ENCODE measurements at regions of chr16 and their contacts with region 1.

Region 1: DNA sequence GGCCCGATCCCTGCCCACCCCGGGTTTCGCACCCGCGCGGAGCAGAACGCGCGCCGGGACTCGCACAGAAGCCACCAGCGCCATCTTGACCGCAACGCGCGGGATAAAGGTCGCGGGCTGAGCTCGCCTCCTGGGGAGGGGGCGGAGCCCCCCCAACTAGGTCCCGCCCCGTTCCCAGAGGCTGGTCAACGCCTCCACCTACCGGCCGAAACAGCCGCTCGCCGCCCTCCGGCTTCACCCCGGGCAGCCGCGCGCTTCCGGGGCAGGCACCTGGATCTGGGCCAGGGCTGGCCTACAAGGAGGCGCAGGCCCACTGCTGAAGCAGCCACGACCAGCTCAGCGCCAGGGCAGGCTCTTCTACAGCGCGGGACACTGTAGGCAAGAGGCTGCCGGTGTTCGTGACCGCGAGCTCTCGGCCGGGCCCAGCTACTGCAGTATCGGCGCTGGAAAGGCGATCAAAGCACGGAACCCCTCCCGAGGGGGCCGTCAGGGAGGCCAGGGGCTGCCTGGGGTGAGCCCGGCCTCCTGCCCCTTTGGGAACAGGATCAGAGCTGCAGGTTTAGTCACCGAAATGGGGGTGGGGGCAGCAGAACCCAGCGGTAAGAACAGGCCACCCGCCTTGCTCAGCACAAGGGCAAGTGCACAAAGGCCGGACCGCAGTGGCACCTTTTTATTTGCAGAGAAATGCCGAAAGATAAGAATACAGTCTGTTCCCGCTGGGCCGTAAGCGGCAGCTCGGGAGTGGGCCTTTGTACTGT is at the start of gene ECI1:
- DNase-seq: peak; percentile 92
- ATAC-seq: peak; percentile 96
- H3K4me3 ChIP-seq: peak within 1 kb of the TSS; percentile 51 to 82 (median 68)
- H3K4me3 Mint-ChIP-seq: peak within 1 kb of the TSS; percentile 88
- H3K27ac ChIP-seq: peak within 1 kb of the TSS; percentile 68 to 72
- H3K27ac Mint-ChIP-seq: peak within 1 kb of the TSS; percentile 89
- H3K4me1 ChIP-seq: peaks cover 12 to 41% of the 10 kb centered on the region in 2 donors
- H3K4me1 Mint-ChIP-seq: peaks cover 26% of the 10 kb centered on the region
- H3K27me3 ChIP-seq: no peaks in the 10 kb centered on the region
- H3K27me3 Mint-ChIP-seq: no peaks in the 10 kb centered on the region
- CTCF ChIP-seq: peak; percentile 58
- total RNA-seq, gene ECI1: 38.4 and 46.4 TPM in 2 replicates

Region 2: DNA sequence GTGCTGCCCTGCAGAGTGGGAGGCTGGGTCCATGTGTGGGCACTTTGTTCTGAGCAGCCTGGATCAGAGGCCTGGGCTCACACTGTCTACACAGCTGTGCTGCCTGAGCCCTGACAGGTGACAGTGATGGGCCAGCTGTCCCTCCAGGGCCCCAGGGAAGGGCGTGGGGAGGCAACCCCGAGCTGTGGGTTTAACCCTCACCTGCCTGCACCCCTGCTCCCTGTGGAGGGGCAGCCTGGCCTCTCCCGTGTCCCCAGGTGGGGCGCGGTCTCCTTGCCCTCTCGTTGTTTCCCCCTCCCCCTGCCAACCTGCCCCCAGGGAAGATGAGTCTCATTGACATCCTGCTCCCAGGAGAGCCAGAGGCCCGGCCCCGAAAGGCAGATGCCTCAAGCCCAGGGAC is 1411.7 kb before region 1 on chr16:
- CTCF ChIA-PET with region 1: no interaction called
- POLR2A ChIA-PET with region 1: no interaction called
- intact Hi-C with region 1: no loop called
- DNase-seq: no peak
- ATAC-seq: no peak
- H3K4me3 ChIP-seq: no peak overlapping the region
- H3K4me3 Mint-ChIP-seq: no peak overlapping the region
- H3K27ac ChIP-seq: no peak overlapping the region
- H3K27ac Mint-ChIP-seq: no peak overlapping the region
- H3K4me1 ChIP-seq: no peaks in the 10 kb centered on the region
- H3K4me1 Mint-ChIP-seq: no peaks in the 10 kb centered on the region
- H3K27me3 ChIP-seq: peaks cover 0 to 3% (median 0%) of the 10 kb centered on the region in 4 experiments
- H3K27me3 Mint-ChIP-seq: peaks cover 3% of the 10 kb centered on the region
- CTCF ChIP-seq: no peak

Region 3: GRCh38 chr16:2194852-2195321 is 56.8 kb before region 1 on chr16:
- CTCF ChIA-PET with region 1: interaction called, 71 read pairs
- POLR2A ChIA-PET with region 1: no interaction called
- intact Hi-C with region 1: loop called (anchors 1 kb)
- DNase-seq: peak; percentile 77
- ATAC-seq: peak; percentile 73
- H3K4me3 ChIP-seq: peak overlapping the region in 1 of 5 experiments; percentile 44
- H3K4me3 Mint-ChIP-seq: peak overlapping the region; percentile 78
- H3K27ac ChIP-seq: no peak overlapping the region
- H3K27ac Mint-ChIP-seq: peak overlapping the region; percentile 37
- H3K4me1 ChIP-seq: peaks cover 12 to 22% of the 10 kb centered on the region in 2 donors
- H3K4me1 Mint-ChIP-seq: peaks cover 10% of the 10 kb centered on the region
- H3K27me3 ChIP-seq: peaks cover 0 to 50% (median 20%) of the 10 kb centered on the region in 4 experiments
- H3K27me3 Mint-ChIP-seq: peaks cover 28% of the 10 kb centered on the region
- CTCF ChIP-seq: peak; percentile 47

Region 4: DNA sequence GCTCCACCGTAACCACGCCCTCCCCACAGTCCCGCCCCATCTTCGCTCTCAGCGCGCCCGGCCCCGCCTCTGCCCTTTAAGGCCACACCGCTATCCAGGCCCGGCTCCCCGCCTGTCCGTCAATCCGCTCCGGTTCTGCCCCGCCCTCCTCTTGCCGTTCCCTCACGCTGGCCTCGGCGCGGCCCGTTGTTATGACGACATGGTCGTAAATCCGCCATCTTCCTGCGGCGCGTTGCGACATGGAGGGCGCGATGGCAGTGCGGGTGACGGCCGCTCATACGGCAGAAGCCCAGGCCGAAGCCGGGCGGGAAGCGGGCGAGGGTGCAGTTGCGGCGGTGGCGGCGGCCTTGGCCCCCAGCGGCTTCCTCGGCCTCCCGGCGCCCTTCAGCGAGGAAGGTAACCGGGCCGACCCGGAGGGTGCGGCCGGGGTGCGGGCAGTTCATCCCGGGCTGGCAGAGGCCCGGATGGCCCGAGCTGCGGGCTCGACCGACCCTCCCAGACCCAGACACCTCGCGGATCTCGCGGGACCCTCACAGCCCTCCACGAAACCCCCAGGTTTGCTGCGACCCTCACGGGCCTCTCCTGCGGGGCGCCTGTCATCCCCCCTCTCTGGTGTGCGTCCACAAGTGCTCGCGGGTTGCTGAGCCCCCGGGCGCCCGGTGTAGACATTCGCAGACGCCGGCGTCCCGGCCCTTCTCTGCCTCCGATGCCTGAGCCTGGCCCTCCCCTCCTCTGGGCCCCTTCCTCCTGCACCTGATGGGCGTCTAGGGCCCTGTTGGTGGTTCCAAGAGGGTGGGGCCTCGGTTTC is 28.1 kb before region 1 on chr16 and contains the start of gene E4F1:
- CTCF ChIA-PET with region 1: interaction called, 3 read pairs
- POLR2A ChIA-PET with region 1: interaction called, 4 read pairs
- intact Hi-C with region 1: loop called (anchors 1 kb)
- DNase-seq: peak; percentile 100
- ATAC-seq: peak; percentile 99
- H3K4me3 ChIP-seq: peak within 1 kb of the TSS; percentile 51 to 92 (median 82)
- H3K4me3 Mint-ChIP-seq: peak within 1 kb of the TSS; percentile 86
- H3K27ac ChIP-seq: peak within 1 kb of the TSS; percentile 47 to 85
- H3K27ac Mint-ChIP-seq: peak within 1 kb of the TSS; percentile 86
- H3K4me1 ChIP-seq: peaks cover 6 to 16% of the 10 kb centered on the region in 2 donors
- H3K4me1 Mint-ChIP-seq: peaks cover 25% of the 10 kb centered on the region
- H3K27me3 ChIP-seq: no peaks in the 10 kb centered on the region
- H3K27me3 Mint-ChIP-seq: no peaks in the 10 kb centered on the region
- CTCF ChIP-seq: no peak
- total RNA-seq, gene E4F1: 41.8 and 43.0 TPM in 2 replicates

Region 5: DNA sequence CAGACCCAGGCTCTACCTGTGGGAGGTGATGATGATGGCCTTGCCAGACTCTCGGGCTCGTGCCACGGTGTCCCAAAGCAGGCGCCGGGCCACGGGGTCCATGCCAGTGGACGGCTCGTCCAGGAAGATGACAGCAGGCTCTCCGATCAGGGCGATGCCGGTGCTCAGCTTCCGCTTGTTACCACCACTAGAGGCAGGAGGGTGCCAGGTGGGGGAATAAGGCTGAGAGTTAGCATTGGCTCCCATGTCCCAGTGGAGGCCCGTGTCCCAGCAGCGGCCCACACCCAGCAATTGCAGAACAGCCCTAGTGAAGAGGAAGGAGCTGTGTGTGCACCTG is 26.6 kb after region 1 on chr16:
- CTCF ChIA-PET with region 1: no interaction called
- POLR2A ChIA-PET with region 1: no interaction called
- intact Hi-C with region 1: no loop called
- DNase-seq: no peak
- ATAC-seq: no peak
- H3K4me3 ChIP-seq: no peak overlapping the region
- H3K4me3 Mint-ChIP-seq: no peak overlapping the region
- H3K27ac ChIP-seq: no peak overlapping the region
- H3K27ac Mint-ChIP-seq: no peak overlapping the region
- H3K4me1 ChIP-seq: no peaks in the 10 kb centered on the region
- H3K4me1 Mint-ChIP-seq: no peaks in the 10 kb centered on the region
- H3K27me3 ChIP-seq: no peaks in the 10 kb centered on the region
- H3K27me3 Mint-ChIP-seq: no peaks in the 10 kb centered on the region
- CTCF ChIP-seq: no peak

Region 6: GRCh38 chr16:2486645-2487516 is 235.2 kb after region 1 on chr16:
- CTCF ChIA-PET with region 1: interaction called, 12 read pairs
- POLR2A ChIA-PET with region 1: interaction called, 9 read pairs
- intact Hi-C with region 1: no loop called
- DNase-seq: peak; percentile 93
- ATAC-seq: peak; percentile 96
- H3K4me3 ChIP-seq: peak overlapping the region in 2 of 5 experiments; percentile 3 to 19
- H3K4me3 Mint-ChIP-seq: peak overlapping the region; percentile 78
- H3K27ac ChIP-seq: peak overlapping the region; percentile 53 to 64
- H3K27ac Mint-ChIP-seq: peak overlapping the region; percentile 90
- H3K4me1 ChIP-seq: peaks cover 24 to 26% of the 10 kb centered on the region in 2 donors
- H3K4me1 Mint-ChIP-seq: peaks cover 19% of the 10 kb centered on the region
- H3K27me3 ChIP-seq: no peaks in the 10 kb centered on the region
- H3K27me3 Mint-ChIP-seq: no peaks in the 10 kb centered on the region
- CTCF ChIP-seq: peak; percentile 59

Region 7: DNA sequence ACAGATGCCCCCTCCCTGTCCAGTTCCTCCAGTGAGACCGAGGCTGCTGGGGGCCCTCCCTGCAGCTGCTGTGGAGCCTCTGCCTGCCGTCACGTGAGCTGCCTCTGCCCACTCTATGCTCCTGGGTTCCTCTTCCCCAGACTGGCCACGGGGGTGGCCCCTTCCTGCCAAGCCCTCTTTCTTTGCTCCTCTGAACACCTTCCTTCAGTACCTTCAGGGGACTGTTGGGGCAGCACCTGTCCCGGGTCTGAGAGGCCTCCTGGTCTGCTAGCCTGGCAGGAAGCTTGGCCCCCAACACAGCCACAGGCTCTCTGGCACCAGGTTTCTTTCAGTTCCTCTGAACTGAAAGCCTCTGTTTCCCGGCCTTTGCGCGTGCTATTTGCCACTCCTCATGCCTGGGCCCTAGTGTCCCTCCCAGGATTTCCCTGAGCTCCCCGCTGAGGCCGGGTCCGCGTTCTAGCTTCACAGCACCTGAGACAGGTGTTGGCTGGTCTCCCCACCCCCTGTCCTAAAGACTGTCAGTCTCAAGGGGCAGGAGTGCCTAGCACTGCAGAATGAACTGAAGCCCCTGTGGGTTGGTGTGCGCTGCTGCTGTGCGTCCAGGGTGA is 255.5 kb after region 1 on chr16:
- CTCF ChIA-PET with region 1: interaction called, 4 read pairs
- POLR2A ChIA-PET with region 1: no interaction called
- intact Hi-C with region 1: loop called (anchors 5 kb)
- DNase-seq: peak; percentile 89
- ATAC-seq: peak; percentile 91
- H3K4me3 ChIP-seq: peak overlapping the region in 2 of 5 experiments; percentile 1 to 12
- H3K4me3 Mint-ChIP-seq: peak overlapping the region; percentile 56
- H3K27ac ChIP-seq: peak overlapping the region; percentile 83 to 100
- H3K27ac Mint-ChIP-seq: peak overlapping the region; percentile 93
- H3K4me1 ChIP-seq: peaks cover 54 to 60% of the 10 kb centered on the region in 2 donors
- H3K4me1 Mint-ChIP-seq: peaks cover 60% of the 10 kb centered on the region
- H3K27me3 ChIP-seq: no peaks in the 10 kb centered on the region
- H3K27me3 Mint-ChIP-seq: no peaks in the 10 kb centered on the region
- CTCF ChIP-seq: peak; percentile 64